ENCODE measurements at regions of chr1 and their contacts with region 1.

Region 1: GRCh38 chr1:174769961-174770549 is 229.7 kb upstream of the CACYBP start:
- DNase-seq: no peak
- ATAC-seq: no peak
- H3K4me3 ChIP-seq: no peak overlapping the region
- H3K27ac ChIP-seq: no peak overlapping the region
- H3K4me1 ChIP-seq: no peaks in the 10 kb centered on the region
- H3K27me3 ChIP-seq: no peaks in the 10 kb centered on the region
- CTCF ChIP-seq: peak; percentile 58 to 81 (median 72)
- POLR2A ChIP-seq: no peak

Region 2: GRCh38 chr1:174892016-174892415 is 122.0 kb after region 1 on chr1:
- intact Hi-C with region 1: no loop called
- DNase-seq: peak; percentile 36 to 76 (median 58)
- ATAC-seq: peak; percentile 88 to 96 (median 92)
- H3K4me3 ChIP-seq: no peak overlapping the region
- H3K27ac ChIP-seq: peak overlapping the region in 10 of 12 donors; percentile 1 to 47 (median 22)
- H3K4me1 ChIP-seq: peaks cover 0 to 18% (median 3%) of the 10 kb centered on the region in 12 donors
- H3K27me3 ChIP-seq: no peaks in the 10 kb centered on the region
- CTCF ChIP-seq: no peak
- POLR2A ChIP-seq: no peak

Region 3: DNA sequence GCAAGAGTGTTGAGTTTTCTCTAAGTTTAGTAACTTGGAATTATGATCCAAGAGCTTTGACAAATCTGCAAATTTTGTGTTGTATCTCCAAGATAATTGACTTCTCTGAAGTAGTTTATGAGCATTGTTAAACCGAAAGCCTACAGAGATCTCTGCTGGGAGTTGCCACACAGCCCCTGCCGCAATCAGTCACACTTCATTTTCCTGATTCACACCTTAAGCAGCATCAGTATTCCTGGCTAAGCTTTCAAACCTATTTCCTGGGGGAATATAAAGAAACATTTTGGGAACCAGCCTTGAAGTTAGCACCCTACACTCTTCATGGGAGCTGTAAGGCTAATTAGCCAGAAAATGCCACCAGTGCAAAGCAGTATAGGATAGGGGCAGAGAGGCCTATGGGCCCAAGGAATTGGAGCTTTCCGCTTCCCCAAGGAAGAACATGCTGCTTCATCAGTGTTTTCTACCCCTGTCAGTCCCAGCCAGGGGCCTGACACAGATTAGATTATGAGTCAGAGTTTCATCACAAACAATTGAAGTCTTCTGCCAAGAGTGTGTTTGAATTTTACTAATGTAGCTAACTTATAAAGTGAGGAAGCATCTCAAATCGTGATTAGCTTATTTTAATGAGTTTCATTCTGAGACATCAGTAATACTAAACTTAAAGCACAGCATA is 206.5 kb after region 1 on chr1:
- intact Hi-C with region 1: loop called in 5 of 10 experiments (anchors 5 kb)
- DNase-seq: no peak
- ATAC-seq: peak in 3 of 4 donors; percentile 11 to 75 (median 50)
- H3K4me3 ChIP-seq: no peak overlapping the region
- H3K27ac ChIP-seq: peak overlapping the region in 2 of 12 donors; percentile 6 to 24
- H3K4me1 ChIP-seq: peaks cover 0 to 31% (median 3%) of the 10 kb centered on the region in 12 donors
- H3K27me3 ChIP-seq: no peaks in the 10 kb centered on the region
- CTCF ChIP-seq: no peak
- POLR2A ChIP-seq: no peak

Region 4: DNA sequence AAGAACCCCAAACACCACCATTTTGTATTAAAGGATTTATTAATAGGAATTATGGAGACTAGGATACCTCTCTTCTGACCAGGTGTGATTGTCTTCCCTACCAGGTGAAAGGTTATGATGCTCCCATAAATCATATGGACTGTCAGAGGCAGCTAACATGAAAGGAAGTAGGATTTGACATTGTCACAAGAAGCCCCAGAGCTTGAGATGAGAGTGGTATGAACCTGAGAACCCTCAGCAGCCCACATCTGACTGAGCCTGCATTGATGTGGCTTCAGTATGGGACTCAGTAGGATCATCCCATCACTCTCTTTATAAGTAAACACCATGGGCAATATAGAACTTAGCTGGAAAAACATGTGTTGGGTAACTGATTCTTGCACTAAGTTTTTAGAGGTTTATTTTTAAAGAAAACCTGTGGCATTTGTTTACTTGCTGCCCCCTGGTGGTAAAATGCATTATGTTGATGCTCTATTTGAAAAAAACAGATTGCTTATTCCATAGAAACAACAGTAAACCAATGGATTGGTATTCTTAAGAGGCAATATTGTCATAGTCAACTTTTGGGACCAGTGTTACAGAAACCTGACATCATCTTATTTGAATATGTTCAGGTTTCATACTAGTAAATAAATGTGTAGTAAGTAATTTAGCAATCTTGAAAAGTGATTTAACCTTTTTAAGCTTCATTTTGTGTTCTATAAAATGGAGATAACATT is 213.1 kb after region 1 on chr1:
- intact Hi-C with region 1: loop called (anchors 2 to 5 kb)
- DNase-seq: no peak
- ATAC-seq: no peak
- H3K4me3 ChIP-seq: no peak overlapping the region
- H3K27ac ChIP-seq: no peak overlapping the region
- H3K4me1 ChIP-seq: no peaks in the 10 kb centered on the region
- H3K27me3 ChIP-seq: no peaks in the 10 kb centered on the region
- CTCF ChIP-seq: peak; percentile 43 to 79 (median 69)
- POLR2A ChIP-seq: no peak

Region 5: DNA sequence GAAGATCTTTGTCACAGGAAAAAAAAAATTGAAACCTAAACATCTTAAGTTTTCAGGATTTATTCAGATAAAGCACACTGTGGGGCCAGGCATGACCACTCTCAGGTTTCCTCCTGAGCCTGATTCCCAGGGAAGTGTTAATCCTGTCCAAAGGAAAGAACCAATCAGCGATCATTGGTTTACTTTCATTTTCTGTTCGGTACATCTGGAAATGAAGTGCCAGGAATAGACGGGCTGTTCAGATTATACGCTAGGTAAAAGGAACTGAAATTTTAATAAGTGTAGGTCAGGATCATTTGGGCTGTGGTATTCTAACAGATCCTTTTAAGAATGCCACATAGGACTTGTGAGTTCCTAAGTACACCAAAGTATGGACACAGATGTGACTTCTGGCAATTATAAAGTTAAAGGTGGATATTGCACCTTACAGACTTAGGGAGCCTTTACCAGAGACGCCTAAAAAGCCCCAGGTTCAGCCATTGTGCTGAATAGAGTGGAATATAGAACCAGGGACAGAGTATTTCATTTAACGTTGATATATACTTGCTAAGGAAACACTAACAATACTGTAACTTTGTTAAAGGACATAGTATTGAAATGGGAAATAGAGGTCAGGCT is 220.4 kb after region 1 on chr1:
- intact Hi-C with region 1: loop called in 5 of 10 experiments (anchors 5 kb)
- DNase-seq: peak in 1 of 5 donors; percentile 20
- ATAC-seq: peak; percentile 48 to 89 (median 82)
- H3K4me3 ChIP-seq: peak overlapping the region in 11 of 12 donors; percentile 6 to 66 (median 52)
- H3K27ac ChIP-seq: peak overlapping the region; percentile 58 to 89 (median 72)
- H3K4me1 ChIP-seq: peaks cover 0 to 24% (median 3%) of the 10 kb centered on the region in 12 donors
- H3K27me3 ChIP-seq: no peaks in the 10 kb centered on the region
- CTCF ChIP-seq: no peak
- POLR2A ChIP-seq: no peak

Region 6: GRCh38 chr1:174999216-174999925 is 229.3 kb after region 1 on chr1:
- intact Hi-C with region 1: loop called in 3 of 10 experiments (anchors 5 kb)
- DNase-seq: peak; percentile 97 to 99 (median 98)
- ATAC-seq: peak; percentile 92 to 96 (median 94)
- H3K4me3 ChIP-seq: peak overlapping the region; percentile 52 to 94 (median 78)
- H3K27ac ChIP-seq: peak overlapping the region; percentile 93 to 99 (median 97)
- H3K4me1 ChIP-seq: peaks cover 0 to 50% (median 14%) of the 10 kb centered on the region in 12 donors
- H3K27me3 ChIP-seq: no peaks in the 10 kb centered on the region
- CTCF ChIP-seq: no peak
- POLR2A ChIP-seq: peak; percentile 17 to 88

Region 7: DNA sequence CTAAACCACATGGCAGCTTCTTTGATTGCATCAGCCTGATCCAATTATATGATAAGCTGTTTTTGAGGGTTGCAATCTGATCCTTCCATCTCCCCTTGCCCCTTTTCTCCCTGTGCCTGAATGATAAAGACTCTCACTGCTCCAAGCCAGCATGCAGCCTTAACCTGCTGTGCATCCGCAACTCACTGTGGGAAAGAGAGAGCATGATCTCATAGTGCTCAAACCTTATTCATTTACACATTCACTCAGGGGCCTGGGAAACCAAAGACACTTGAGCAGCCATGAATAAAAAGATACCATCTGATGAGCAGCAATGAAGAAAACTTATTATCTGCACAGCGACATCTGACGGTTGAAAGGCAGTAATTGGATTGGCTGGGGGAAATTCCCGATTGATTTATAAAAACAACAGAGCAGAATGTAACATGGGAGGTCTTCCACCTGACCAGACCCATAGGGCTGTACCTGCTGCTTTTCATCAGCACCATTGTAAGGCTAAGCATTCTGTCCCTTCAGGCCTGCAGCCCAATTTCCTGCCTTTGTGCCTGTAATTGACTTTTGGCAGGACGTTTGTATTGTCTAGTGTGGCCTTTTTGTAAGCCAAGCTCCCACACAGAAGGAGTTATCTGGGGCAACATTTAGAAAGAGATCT is 360.1 kb after region 1 on chr1:
- intact Hi-C with region 1: loop called in 2 of 10 experiments (anchors 5 to 10 kb)
- DNase-seq: peak in 2 of 5 donors; percentile 31 to 38
- ATAC-seq: peak; percentile 48 to 81 (median 66)
- H3K4me3 ChIP-seq: no peak overlapping the region
- H3K27ac ChIP-seq: peak overlapping the region in 10 of 12 donors; percentile 1 to 65 (median 37)
- H3K4me1 ChIP-seq: peaks cover 0 to 52% (median 31%) of the 10 kb centered on the region in 12 donors
- H3K27me3 ChIP-seq: no peaks in the 10 kb centered on the region
- CTCF ChIP-seq: no peak
- POLR2A ChIP-seq: no peak